CD4-positive, alpha-beta T cell (primary cell): ENCODE measurements at regions of chr17 and their contacts with region 1.

Region 1: DNA sequence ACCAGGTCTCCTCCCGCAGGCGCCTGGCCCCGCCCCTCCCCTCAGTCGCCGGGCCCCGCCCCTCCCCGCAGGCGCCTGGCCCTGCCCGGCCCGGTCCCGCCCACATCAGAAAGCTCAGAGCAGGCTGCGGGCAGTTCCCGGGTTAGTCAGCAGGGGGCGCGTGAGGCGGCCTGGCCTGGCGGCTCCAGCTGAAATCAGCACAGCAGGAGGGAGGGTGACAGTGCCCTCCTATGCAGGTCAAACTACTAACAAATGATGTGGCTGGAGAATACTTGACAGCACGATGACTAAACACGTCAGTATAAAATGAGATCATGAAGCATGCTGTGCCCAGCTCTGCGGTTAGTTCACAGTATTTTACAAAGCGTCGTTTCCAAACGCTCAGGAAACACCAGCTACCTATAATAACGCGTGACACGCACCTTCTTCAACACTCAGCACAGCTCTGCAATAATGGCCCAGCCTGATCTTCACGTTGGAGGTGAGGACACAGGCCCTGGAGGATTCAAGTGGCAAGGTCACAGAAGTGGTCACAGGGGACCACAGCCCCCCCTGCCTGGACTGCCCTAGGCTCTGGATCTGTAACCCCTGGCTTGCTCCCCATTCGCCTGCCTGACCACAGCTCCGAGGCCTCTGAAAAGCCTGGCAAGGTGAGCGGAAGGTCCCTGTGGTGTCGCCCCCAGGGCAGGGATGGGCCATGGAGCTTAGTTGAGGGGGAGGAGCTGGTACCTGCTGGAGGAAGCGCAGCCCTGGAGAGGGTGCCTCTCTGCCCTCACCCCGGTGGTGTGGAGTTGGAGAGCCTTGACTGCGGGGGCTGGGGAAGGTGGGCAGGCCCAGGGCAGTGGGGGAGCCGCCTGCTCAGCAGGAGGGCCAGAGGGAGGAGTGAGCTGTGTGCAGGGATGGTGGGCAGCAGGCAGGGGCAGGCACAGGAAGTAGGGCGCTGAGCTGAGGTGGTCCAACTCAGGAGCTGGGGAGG is 81.2 kb downstream of the KCNJ12 start:
- DNase-seq: peak; percentile 85 to 96 (median 90)
- ATAC-seq: peak; percentile 87
- H3K4me3 ChIP-seq: no peak overlapping the region
- H3K4me3 Mint-ChIP-seq: no peak overlapping the region
- H3K27ac ChIP-seq: no peak overlapping the region
- H3K27ac Mint-ChIP-seq: peak overlapping the region; percentile 54
- H3K4me1 ChIP-seq: peaks cover 12% of the 10 kb centered on the region
- H3K4me1 Mint-ChIP-seq: peaks cover 18% of the 10 kb centered on the region
- H3K27me3 ChIP-seq: peaks cover 0 to 2% of the 10 kb centered on the region in 2 experiments
- H3K27me3 Mint-ChIP-seq: peaks cover 25% of the 10 kb centered on the region
- CTCF ChIP-seq: peak; percentile 92

Region 2: DNA sequence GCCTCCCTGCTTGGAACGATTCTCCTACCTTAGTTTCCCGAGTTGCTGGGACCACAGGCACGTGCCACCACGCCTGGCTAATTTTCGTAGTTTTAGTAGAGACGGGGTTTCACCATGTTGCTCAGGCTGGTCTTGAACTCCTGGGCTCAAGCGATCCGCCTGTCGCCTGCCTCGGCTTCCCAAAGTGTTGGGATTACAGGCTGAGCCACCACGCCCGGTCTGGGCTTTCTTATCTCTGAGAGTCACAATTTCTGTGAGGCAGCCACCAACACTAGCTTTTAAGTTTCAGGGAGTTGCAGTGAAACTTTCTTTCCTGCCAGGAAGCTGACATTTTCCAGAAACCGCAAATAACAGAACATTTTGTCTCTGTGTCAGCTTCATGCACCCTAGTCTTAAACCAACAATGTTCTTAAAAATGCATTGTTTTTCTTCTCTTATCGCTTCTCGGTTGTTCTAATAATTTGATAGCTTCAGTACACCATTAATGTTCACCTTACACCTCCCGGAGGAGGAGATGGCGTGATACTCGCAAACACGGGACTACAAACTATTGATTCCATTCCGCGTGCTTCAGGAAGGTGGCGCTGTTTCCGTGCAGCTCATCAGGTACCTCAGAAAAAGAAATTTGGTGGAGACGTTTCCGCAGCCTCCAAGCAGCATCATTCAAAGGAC is 338.0 kb before region 1 on chr17:
- CTCF ChIA-PET with region 1: interaction called, 5 read pairs
- POLR2A ChIA-PET with region 1: no interaction called
- intact Hi-C with region 1: loop called in 1 of 2 experiments (anchors 5 kb)
- DNase-seq: peak; percentile 52 to 88 (median 63)
- ATAC-seq: peak; percentile 98
- H3K4me3 ChIP-seq: no peak overlapping the region
- H3K4me3 Mint-ChIP-seq: no peak overlapping the region
- H3K27ac ChIP-seq: no peak overlapping the region
- H3K27ac Mint-ChIP-seq: no peak overlapping the region
- H3K4me1 ChIP-seq: peaks cover 4% of the 10 kb centered on the region
- H3K4me1 Mint-ChIP-seq: peaks cover 10% of the 10 kb centered on the region
- H3K27me3 ChIP-seq: no peaks in the 10 kb centered on the region
- H3K27me3 Mint-ChIP-seq: peaks cover 4% of the 10 kb centered on the region
- CTCF ChIP-seq: peak; percentile 80

Region 3: GRCh38 chr17:21318439-21318838 is 138.9 kb before region 1 on chr17:
- CTCF ChIA-PET with region 1: no interaction called
- POLR2A ChIA-PET with region 1: no interaction called
- intact Hi-C with region 1: loop called in 1 of 2 experiments (anchors 10 kb)
- DNase-seq: peak in 1 of 14 experiments; percentile 18
- ATAC-seq: no peak
- H3K4me3 ChIP-seq: no peak overlapping the region
- H3K4me3 Mint-ChIP-seq: no peak overlapping the region
- H3K27ac ChIP-seq: no peak overlapping the region
- H3K27ac Mint-ChIP-seq: no peak overlapping the region
- H3K4me1 ChIP-seq: peaks cover 14% of the 10 kb centered on the region
- H3K4me1 Mint-ChIP-seq: peaks cover 6% of the 10 kb centered on the region
- H3K27me3 ChIP-seq: no peaks in the 10 kb centered on the region
- H3K27me3 Mint-ChIP-seq: peaks cover 4% of the 10 kb centered on the region
- CTCF ChIP-seq: no peak

Region 4: GRCh38 chr17:21397341-21398190 is 59.8 kb before region 1 on chr17:
- CTCF ChIA-PET with region 1: no interaction called
- POLR2A ChIA-PET with region 1: no interaction called
- intact Hi-C with region 1: no loop called
- DNase-seq: no peak
- ATAC-seq: no peak
- H3K4me3 ChIP-seq: no peak overlapping the region
- H3K4me3 Mint-ChIP-seq: no peak overlapping the region
- H3K27ac ChIP-seq: no peak overlapping the region
- H3K27ac Mint-ChIP-seq: no peak overlapping the region
- H3K4me1 ChIP-seq: no peaks in the 10 kb centered on the region
- H3K4me1 Mint-ChIP-seq: no peaks in the 10 kb centered on the region
- H3K27me3 ChIP-seq: no peaks in the 10 kb centered on the region
- H3K27me3 Mint-ChIP-seq: no peaks in the 10 kb centered on the region
- CTCF ChIP-seq: no peak

Region 5: GRCh38 chr17:21419299-21420239 is 37.8 kb before region 1 on chr17:
- CTCF ChIA-PET with region 1: no interaction called
- POLR2A ChIA-PET with region 1: no interaction called
- intact Hi-C with region 1: loop called in 1 of 2 experiments (anchors 1 kb)
- DNase-seq: peak; percentile 15 to 82 (median 49)
- ATAC-seq: peak; percentile 81
- H3K4me3 ChIP-seq: peak overlapping the region; percentile 40
- H3K4me3 Mint-ChIP-seq: peak overlapping the region; percentile 85
- H3K27ac ChIP-seq: peak overlapping the region; percentile 24 to 80
- H3K27ac Mint-ChIP-seq: peak overlapping the region; percentile 95
- H3K4me1 ChIP-seq: peaks cover 23% of the 10 kb centered on the region
- H3K4me1 Mint-ChIP-seq: peaks cover 21% of the 10 kb centered on the region
- H3K27me3 ChIP-seq: no peaks in the 10 kb centered on the region
- H3K27me3 Mint-ChIP-seq: no peaks in the 10 kb centered on the region
- CTCF ChIP-seq: no peak

Region 6: DNA sequence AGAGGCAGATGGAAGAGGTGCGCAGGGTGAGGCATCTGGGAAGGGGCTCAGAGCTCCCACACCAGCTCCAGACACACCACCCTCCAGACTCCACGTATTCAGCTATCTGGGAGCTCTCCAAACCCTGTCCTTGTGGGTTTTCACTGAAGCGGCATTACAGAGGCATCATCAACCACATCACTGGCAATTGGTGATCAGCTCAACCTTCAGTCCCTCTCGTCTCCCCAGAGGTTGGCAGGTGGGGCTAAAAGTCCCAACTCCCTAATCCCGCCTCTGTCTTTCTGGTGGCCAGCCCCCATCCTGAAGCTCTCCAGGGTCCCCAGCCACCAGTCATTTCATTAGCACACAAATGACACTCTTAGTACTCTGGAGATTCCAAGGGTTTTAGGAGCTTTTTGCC is 42.7 kb after region 1 on chr17:
- CTCF ChIA-PET with region 1: no interaction called
- POLR2A ChIA-PET with region 1: no interaction called
- intact Hi-C with region 1: no loop called
- DNase-seq: no peak
- ATAC-seq: no peak
- H3K4me3 ChIP-seq: no peak overlapping the region
- H3K4me3 Mint-ChIP-seq: no peak overlapping the region
- H3K27ac ChIP-seq: no peak overlapping the region
- H3K27ac Mint-ChIP-seq: no peak overlapping the region
- H3K4me1 ChIP-seq: no peaks in the 10 kb centered on the region
- H3K4me1 Mint-ChIP-seq: no peaks in the 10 kb centered on the region
- H3K27me3 ChIP-seq: no peaks in the 10 kb centered on the region
- H3K27me3 Mint-ChIP-seq: peaks cover 13% of the 10 kb centered on the region
- CTCF ChIP-seq: no peak